ENCODE measurements at regions of chr1 and their contacts with region 1.

Region 1: GRCh38 chr1:117895482-117896114 is 33.8 kb downstream of the GDAP2 start:
- DNase-seq: peak; percentile 92
- ATAC-seq: peak; percentile 89
- H3K4me3 ChIP-seq: no peak overlapping the region
- H3K27ac ChIP-seq: no peak overlapping the region
- H3K4me1 ChIP-seq: peaks cover 2% of the 10 kb centered on the region; the same call in 1 of the 2 replicates
- H3K27me3 ChIP-seq: no peaks in the 10 kb centered on the region
- CTCF ChIP-seq: peak; percentile 94
- POLR2A ChIP-seq: no peak; the same call in 1 of the 2 replicates
- RAD21 ChIP-seq: peak; percentile 97

Region 2: GRCh38 chr1:117312225-117313138 is 583.1 kb before region 1 on chr1:
- CTCF ChIA-PET with region 1: no interaction called
- POLR2A ChIA-PET with region 1: no interaction called
- dilution Hi-C with region 1: no loop called
- in situ Hi-C with region 1: no loop called
- intact Hi-C with region 1: loop called (anchors 10 kb)
- DNase-seq: peak; percentile 83
- ATAC-seq: peak; percentile 96
- H3K4me3 ChIP-seq: no peak overlapping the region
- H3K27ac ChIP-seq: peak overlapping the region; percentile 55; the same call in 1 of the 2 replicates
- H3K4me1 ChIP-seq: peaks cover 2% of the 10 kb centered on the region
- H3K27me3 ChIP-seq: peaks cover 2% of the 10 kb centered on the region; the same call in 1 of the 2 replicates
- CTCF ChIP-seq: peak; percentile 67
- POLR2A ChIP-seq: no peak
- RAD21 ChIP-seq: peak; percentile 49

Region 3: GRCh38 chr1:117512743-117513321 is 382.8 kb before region 1 on chr1:
- CTCF ChIA-PET with region 1: interaction called, 3 read pairs
- POLR2A ChIA-PET with region 1: no interaction called
- dilution Hi-C with region 1: no loop called
- in situ Hi-C with region 1: no loop called
- intact Hi-C with region 1: loop called (anchors 1 kb)
- DNase-seq: peak; percentile 40
- ATAC-seq: peak; percentile 72
- H3K4me3 ChIP-seq: no peak overlapping the region
- H3K27ac ChIP-seq: no peak overlapping the region
- H3K4me1 ChIP-seq: no peaks in the 10 kb centered on the region
- H3K27me3 ChIP-seq: no peaks in the 10 kb centered on the region
- CTCF ChIP-seq: peak; percentile 84
- POLR2A ChIP-seq: no peak
- RAD21 ChIP-seq: peak; percentile 77

Region 4: GRCh38 chr1:117605774-117606648 is 289.6 kb before region 1 on chr1 and contains the start of gene TENT5C:
- CTCF ChIA-PET with region 1: no interaction called
- POLR2A ChIA-PET with region 1: no interaction called
- dilution Hi-C with region 1: no loop called
- in situ Hi-C with region 1: no loop called
- intact Hi-C with region 1: loop called (anchors 2 kb)
- DNase-seq: peak; percentile 95
- ATAC-seq: peak; percentile 98
- H3K4me3 ChIP-seq: peak within 1 kb of the TSS; percentile 84
- H3K27ac ChIP-seq: peak within 1 kb of the TSS; percentile 47
- H3K4me1 ChIP-seq: peaks cover 5% of the 10 kb centered on the region; the same call in 1 of the 2 replicates
- H3K27me3 ChIP-seq: 0 out of 2 replicates have a peak, but pooled peaks cover 2% of the 10 kb centered on the region
- CTCF ChIP-seq: no peak
- POLR2A ChIP-seq: peak; percentile 96
- RAD21 ChIP-seq: no peak
- total RNA-seq, gene TENT5C: 4.1 and 5.3 TPM in 2 replicates

Region 5: GRCh38 chr1:117644696-117645311 is 250.8 kb before region 1 on chr1:
- CTCF ChIA-PET with region 1: no interaction called
- POLR2A ChIA-PET with region 1: no interaction called
- dilution Hi-C with region 1: no loop called
- in situ Hi-C with region 1: no loop called
- intact Hi-C with region 1: no loop called
- DNase-seq: no peak
- ATAC-seq: no peak
- H3K4me3 ChIP-seq: no peak overlapping the region
- H3K27ac ChIP-seq: no peak overlapping the region
- H3K4me1 ChIP-seq: peaks cover 2% of the 10 kb centered on the region; the same call in 1 of the 2 replicates
- H3K27me3 ChIP-seq: no peaks in the 10 kb centered on the region; the same call in 1 of the 2 replicates
- CTCF ChIP-seq: no peak
- POLR2A ChIP-seq: no peak
- RAD21 ChIP-seq: no peak

Region 6: DNA sequence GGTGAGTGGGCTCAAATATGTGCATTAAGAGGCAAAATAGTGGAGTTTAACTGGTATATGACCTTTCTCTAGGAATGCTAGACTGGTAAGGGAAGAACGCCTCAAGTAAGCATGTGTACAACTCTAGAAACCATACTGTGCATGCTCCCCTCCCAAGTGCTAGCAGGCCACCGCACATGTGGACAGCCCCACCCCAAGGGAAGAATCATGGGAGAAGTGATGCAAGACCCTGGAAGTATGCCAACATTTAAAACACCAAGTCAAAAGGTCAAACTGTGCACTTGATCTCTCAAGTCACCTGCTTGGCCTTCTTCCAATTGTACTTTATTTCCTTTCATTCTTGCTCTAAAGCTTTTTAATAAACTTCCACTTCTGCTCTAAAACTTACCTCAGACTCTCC is 154.4 kb after region 1 on chr1:
- CTCF ChIA-PET with region 1: no interaction called
- POLR2A ChIA-PET with region 1: no interaction called
- dilution Hi-C with region 1: no loop called
- in situ Hi-C with region 1: no loop called
- intact Hi-C with region 1: no loop called
- DNase-seq: no peak
- ATAC-seq: no peak
- H3K4me3 ChIP-seq: no peak overlapping the region
- H3K27ac ChIP-seq: no peak overlapping the region
- H3K4me1 ChIP-seq: no peaks in the 10 kb centered on the region
- H3K27me3 ChIP-seq: no peaks in the 10 kb centered on the region
- CTCF ChIP-seq: no peak
- POLR2A ChIP-seq: no peak
- RAD21 ChIP-seq: no peak

Region 7: GRCh38 chr1:118317842-118318614 is 422.4 kb after region 1 on chr1:
- CTCF ChIA-PET with region 1: no interaction called
- POLR2A ChIA-PET with region 1: no interaction called
- dilution Hi-C with region 1: no loop called
- in situ Hi-C with region 1: no loop called
- intact Hi-C with region 1: no loop called
- DNase-seq: no peak
- ATAC-seq: no peak
- H3K4me3 ChIP-seq: no peak overlapping the region
- H3K27ac ChIP-seq: no peak overlapping the region
- H3K4me1 ChIP-seq: no peaks in the 10 kb centered on the region
- H3K27me3 ChIP-seq: no peaks in the 10 kb centered on the region
- CTCF ChIP-seq: no peak
- POLR2A ChIP-seq: no peak
- RAD21 ChIP-seq: no peak

Measured in IMR-90 (cell line).